ENCODE measurements at regions of chrX and their contacts with region 1.

Region 1: DNA sequence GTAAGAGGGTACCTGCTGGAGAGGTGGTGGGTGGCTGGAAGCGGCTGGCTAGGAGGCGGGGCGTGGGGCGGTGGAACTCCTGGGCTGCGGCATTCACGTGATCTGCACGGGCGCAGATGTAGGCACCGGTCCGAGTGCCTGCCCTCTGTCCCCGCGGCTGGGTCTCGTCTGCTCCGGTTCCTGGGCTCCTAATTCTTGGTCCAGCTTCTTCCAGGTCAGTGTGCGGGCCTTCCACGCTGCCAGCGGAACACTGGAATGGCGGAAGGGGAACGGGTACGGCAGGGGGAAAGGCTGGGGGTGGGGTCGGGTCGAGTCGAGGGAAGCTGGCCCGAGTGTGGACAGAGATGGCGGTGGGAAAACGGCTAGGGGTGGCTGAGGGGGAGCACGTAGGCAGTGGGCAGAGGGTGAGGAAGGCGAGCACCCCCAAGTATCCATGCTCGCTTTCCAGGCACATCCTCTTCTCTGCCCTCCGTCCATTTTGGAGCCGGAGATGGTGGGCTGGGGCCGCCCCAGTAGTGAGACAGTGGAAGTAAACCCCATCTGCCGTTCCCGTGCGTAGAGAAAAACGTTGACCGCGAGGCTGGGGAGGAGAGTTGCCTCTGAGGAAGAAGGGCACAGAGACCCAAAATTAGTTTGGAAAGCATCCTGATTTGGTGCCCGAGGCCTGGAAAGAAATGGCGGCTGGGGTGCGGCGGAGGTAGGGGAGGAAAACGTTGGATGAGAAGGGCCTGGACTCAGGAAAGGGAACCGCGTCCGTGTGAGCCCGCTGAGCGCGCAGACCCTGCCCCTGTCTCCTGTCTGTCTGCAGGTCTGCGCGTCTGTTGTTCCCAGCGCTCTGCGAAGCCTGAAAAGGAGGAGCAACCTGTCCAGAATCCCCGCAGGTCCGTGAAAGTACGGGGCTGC is at the start of gene TCEAL4:
- DNase-seq: peak; percentile 52 to 94 (median 65)

Region 2: DNA sequence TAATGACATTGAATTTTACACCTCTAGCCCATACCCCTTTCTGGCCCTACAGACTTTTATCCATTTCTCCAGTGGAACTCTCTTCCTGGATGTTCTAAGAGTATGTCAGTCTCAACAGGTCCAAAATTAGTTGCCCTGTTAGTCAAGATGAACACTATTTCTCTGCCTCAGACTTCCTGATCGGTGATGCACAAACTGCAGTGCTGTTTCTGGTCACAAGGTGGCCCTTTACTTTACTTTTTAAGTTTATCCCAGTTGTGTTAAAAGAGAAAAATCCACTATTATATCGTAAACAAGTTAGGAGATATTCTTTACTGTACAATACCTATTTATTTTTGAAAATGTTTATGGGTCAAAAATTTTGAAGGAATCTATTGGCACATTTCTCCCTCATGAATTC is 242.6 kb before region 1 on chrX:
- intact Hi-C with region 1: no loop called
- DNase-seq: peak in 4 of 10 donors; percentile 17 to 38 (median 30)

Region 3: GRCh38 chrX:103442536-103442901 is 143.1 kb before region 1 on chrX:
- intact Hi-C with region 1: no loop called
- DNase-seq: no peak

Region 4: DNA sequence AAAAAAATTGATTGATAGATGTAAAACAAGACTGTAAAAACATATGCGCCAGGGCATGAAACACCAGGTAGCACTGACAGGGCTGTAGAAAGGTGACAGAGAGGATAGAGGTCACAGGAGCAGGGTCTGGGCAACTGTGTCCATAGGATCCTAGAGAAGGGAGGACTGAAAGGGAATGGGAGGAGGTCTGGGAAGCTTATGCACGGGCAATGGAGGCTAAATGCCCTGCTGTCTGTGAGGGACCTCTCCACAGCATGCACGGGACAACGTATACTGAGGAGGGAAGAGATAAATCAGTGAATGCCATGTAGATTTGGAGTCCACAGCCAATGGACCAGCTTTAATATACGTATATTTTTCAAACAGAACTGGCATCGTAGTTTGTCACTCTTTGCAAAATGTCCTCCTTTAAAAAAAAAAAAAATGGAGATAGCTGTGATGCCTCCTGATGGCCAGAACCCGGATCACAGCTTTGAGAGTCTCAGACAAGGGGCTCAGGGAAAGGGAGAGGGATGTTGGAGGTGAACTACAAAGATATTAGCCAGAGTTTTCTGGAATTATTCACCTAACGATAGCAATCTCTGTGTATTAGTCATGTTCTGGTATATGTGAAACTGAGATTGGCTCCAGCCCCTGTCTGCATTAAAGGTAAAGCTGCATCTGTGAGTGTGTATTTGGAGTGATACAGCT is 82.4 kb before region 1 on chrX:
- intact Hi-C with region 1: no loop called
- DNase-seq: no peak

Region 5: GRCh38 chrX:103629318-103630170 is 43.9 kb after region 1 on chrX:
- intact Hi-C with region 1: loop called (anchors 2 kb)
- DNase-seq: peak; percentile 52 to 95 (median 67)